ENCODE measurements at regions of chr14 and their contacts with region 1.

Region 1: GRCh38 chr14:20682435-20683124 is 1.8 kb upstream of the RNASE4 start:
- DNase-seq: peak; percentile 81 to 96
- ATAC-seq: peak; percentile 67 to 77
- H3K4me3 ChIP-seq: peak overlapping the region; percentile 58
- H3K27ac ChIP-seq: peak overlapping the region; percentile 95
- H3K4me1 ChIP-seq: peaks cover 33% of the 10 kb centered on the region
- CTCF ChIP-seq: no peak
- EP300 ChIP-seq: no peak
- POLR2A ChIP-seq: peak; percentile 80
- RAD21 ChIP-seq: no peak

Region 2: GRCh38 chr14:20516906-20517305 is 165.7 kb before region 1 on chr14:
- CTCF ChIA-PET with region 1: no interaction called
- POLR2A ChIA-PET with region 1: no interaction called
- DNase-seq: no peak
- ATAC-seq: no peak
- H3K4me3 ChIP-seq: no peak overlapping the region
- H3K27ac ChIP-seq: no peak overlapping the region
- H3K4me1 ChIP-seq: no peaks in the 10 kb centered on the region
- CTCF ChIP-seq: no peak
- EP300 ChIP-seq: no peak
- POLR2A ChIP-seq: no peak
- RAD21 ChIP-seq: no peak

Region 3: GRCh38 chr14:20652996-20653975 is 29.3 kb before region 1 on chr14:
- CTCF ChIA-PET with region 1: interaction called, 191 read pairs
- POLR2A ChIA-PET with region 1: interaction called, 15 read pairs
- DNase-seq: peak; percentile 64 to 97
- ATAC-seq: peak; percentile 75 to 83
- H3K4me3 ChIP-seq: peak overlapping the region; percentile 75
- H3K27ac ChIP-seq: peak overlapping the region; percentile 25 to 65; a peak in 3 of 6 replicates
- H3K4me1 ChIP-seq: peaks cover 26% of the 10 kb centered on the region; the same call in 2 of the 3 replicates
- CTCF ChIP-seq: no peak
- EP300 ChIP-seq: no peak
- POLR2A ChIP-seq: no peak
- RAD21 ChIP-seq: no peak; a peak in 1 of 5 replicates

Measured in A549 (cell line).